ENCODE measurements at regions of chr3 and their contacts with region 1.

Region 1: GRCh38 chr3:184811999-184812661 is at the start of gene VPS8:
- DNase-seq: peak; percentile 97
- ATAC-seq: peak; percentile 87
- H3K4me3 Mint-ChIP-seq: peak within 1 kb of the TSS; percentile 93
- H3K27ac Mint-ChIP-seq: peak within 1 kb of the TSS; percentile 97
- H3K4me1 Mint-ChIP-seq: peaks cover 56% of the 10 kb centered on the region
- H3K27me3 Mint-ChIP-seq: peaks cover 2% of the 10 kb centered on the region
- total RNA-seq, gene VPS8: 47.6 to 51.8 TPM

Region 2: DNA sequence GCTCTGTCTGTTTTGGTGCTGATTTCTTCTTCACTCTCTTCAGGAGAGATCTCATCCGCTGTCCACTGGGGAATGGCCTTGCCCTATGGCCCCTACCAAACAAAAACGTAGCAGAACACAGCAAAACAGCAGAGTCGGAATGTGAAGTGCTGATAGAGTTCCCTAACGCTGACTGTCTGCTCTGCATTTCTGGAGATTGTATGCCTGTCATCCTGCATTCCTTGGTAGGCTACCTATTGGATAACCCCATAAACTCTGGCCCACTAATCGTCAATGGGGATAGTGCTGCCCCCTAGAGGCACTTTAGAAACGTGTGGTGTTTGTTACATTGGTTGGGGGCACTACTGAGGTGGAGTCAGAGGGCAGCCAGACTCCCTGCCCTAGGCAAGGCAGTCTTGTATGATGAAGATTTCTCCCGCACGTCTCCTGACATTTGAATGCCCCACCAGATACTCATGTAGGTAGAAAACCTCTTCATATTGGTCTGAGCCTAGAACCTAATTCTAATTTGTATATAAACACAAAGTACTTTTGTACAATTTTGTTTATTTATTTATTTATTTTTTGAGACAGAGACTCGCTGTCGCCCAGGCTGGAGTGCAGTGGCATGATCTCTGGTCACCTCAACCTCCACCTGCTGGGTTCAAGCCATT is 84.6 kb before region 1 on chr3:
- CTCF ChIA-PET with region 1: no interaction called
- POLR2A ChIA-PET with region 1: no interaction called
- DNase-seq: peak; percentile 60
- ATAC-seq: peak; percentile 88
- H3K4me3 Mint-ChIP-seq: no peak overlapping the region
- H3K27ac Mint-ChIP-seq: no peak overlapping the region
- H3K4me1 Mint-ChIP-seq: no peaks in the 10 kb centered on the region
- H3K27me3 Mint-ChIP-seq: peaks cover 16% of the 10 kb centered on the region

Region 3: DNA sequence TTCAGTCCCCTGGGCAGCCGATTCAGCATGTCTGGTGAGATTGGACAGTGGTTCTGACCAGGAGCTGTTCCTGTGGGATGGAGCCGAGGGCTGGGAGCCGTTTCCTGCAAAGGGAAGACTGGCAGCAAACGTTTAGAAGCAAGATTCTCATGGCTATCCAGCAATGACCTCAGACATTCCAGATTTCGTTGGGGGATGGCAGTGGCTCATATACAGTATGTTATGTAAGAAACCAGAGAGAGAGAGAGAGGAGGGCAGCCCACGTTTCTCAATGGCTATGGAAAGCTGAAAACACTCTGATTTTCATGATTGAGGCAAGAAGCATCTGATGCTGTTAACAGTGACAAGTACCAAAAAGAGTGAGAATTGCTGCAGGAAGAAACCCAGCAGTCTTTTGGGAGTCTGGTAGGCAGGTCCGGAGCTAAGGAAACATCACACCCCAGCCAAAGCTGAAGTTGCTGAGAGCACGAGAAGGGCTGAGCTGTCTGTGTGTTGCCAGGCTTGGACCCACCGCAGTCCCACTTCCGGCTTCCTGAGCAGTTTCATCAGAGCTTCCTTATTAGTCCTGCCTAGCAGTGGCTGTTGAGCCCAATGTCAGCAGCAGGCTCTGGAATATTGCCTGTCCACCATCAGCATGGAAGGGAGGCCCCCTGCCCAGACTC is 25.7 kb before region 1 on chr3:
- CTCF ChIA-PET with region 1: interaction called, 10 read pairs
- POLR2A ChIA-PET with region 1: no interaction called
- DNase-seq: peak; percentile 65
- ATAC-seq: peak; percentile 86
- H3K4me3 Mint-ChIP-seq: no peak overlapping the region
- H3K27ac Mint-ChIP-seq: peak overlapping the region; percentile 11
- H3K4me1 Mint-ChIP-seq: peaks cover 28% of the 10 kb centered on the region
- H3K27me3 Mint-ChIP-seq: peaks cover 6% of the 10 kb centered on the region

Region 4: GRCh38 chr3:184800349-184800930 is 11.7 kb before region 1 on chr3:
- CTCF ChIA-PET with region 1: interaction called, 40 read pairs
- POLR2A ChIA-PET with region 1: interaction called, 6 read pairs
- DNase-seq: no peak
- ATAC-seq: no peak
- H3K4me3 Mint-ChIP-seq: no peak overlapping the region
- H3K27ac Mint-ChIP-seq: no peak overlapping the region
- H3K4me1 Mint-ChIP-seq: peaks cover 4% of the 10 kb centered on the region
- H3K27me3 Mint-ChIP-seq: peaks cover 36% of the 10 kb centered on the region

Measured in activated CD8-positive, alpha-beta T cell treated with anti-CD3 and anti-CD28 coated beads, Interleukin-2, amount 10 ng/mL, durations not matched to agents 7 days and 5 days (primary cell).